ENCODE measurements at regions of chr17 and their contacts with region 1.

Region 1: DNA sequence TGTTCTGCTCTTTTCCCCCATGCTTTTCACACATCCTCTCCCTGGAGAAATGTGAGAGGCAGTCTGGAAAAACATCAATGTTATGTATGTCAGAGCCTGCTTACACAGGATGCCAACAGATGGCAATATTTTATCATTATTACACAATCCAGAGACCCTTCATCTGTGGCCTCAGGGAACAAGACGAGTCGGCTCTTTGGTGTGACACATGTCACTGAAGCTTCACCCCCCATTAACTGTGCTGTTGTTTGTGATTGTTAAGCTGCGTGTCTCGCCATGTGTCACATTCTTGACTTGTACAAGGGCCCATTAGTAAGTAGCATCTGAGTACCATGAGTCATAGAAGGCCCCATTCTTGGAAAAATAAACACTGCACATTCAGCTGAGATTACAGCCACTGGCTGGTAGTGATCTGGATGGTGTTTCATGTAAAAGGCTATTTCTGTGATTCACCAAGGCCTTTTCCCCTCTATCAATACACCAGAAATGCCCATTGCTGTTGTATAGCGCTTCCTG is 682.1 kb upstream of the SOX9 start:
- DNase-seq: peak; percentile 97
- ATAC-seq: peak; percentile 76
- H3K4me3 ChIP-seq: no peak overlapping the region
- H3K27ac ChIP-seq: peak overlapping the region; percentile 89
- H3K4me1 ChIP-seq: peaks cover 64% of the 10 kb centered on the region
- H3K27me3 ChIP-seq: no peaks in the 10 kb centered on the region
- CTCF ChIP-seq: peak; percentile 40

Region 2: DNA sequence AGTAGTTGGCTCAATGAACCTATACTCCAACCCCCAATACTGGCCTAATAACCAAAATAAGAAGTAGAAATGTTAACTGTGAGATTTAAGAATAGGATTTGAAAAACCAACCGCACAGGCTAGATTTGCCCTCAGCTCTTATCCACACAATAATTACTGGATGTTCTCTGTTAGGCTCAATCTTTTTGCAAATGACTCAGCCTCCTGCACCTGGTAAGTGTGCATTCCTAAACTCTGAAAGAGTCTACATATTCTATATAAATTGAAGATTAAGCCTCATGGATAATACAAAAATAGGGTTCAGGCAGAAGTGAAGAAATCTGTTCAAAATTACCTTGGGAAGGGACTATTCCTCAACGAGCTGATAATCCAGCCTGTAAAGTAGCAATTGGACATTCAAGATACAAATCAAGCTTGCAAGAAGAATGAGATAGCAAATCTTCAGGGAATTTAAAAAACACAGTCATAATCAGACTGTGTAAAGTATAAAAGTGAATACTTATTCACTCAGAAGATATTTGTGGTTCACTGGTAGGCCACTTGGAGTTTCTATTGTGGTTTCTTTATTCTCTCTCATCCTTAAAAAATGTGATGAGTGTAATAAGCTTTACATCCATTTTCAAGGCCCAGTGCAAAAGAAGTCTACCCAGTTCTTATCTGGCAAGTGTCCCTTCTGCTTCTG is 249.7 kb before region 1 on chr17:
- CTCF ChIA-PET with region 1: interaction called, 4 read pairs
- POLR2A ChIA-PET with region 1: no interaction called
- intact Hi-C with region 1: loop called (anchors 5 kb)
- DNase-seq: peak; percentile 96
- ATAC-seq: peak; percentile 95
- H3K4me3 ChIP-seq: peak overlapping the region; percentile 26
- H3K27ac ChIP-seq: peak overlapping the region; percentile 92
- H3K4me1 ChIP-seq: peaks cover 35% of the 10 kb centered on the region
- H3K27me3 ChIP-seq: no peaks in the 10 kb centered on the region
- CTCF ChIP-seq: no peak

Region 3: GRCh38 chr17:71455219-71455618 is 16.5 kb after region 1 on chr17:
- CTCF ChIA-PET with region 1: no interaction called
- POLR2A ChIA-PET with region 1: no interaction called
- intact Hi-C with region 1: loop called (anchors 2 kb)
- DNase-seq: peak; percentile 79
- ATAC-seq: peak; percentile 90
- H3K4me3 ChIP-seq: no peak overlapping the region
- H3K27ac ChIP-seq: peak overlapping the region; percentile 56
- H3K4me1 ChIP-seq: peaks cover 20% of the 10 kb centered on the region
- H3K27me3 ChIP-seq: no peaks in the 10 kb centered on the region
- CTCF ChIP-seq: no peak

Region 4: GRCh38 chr17:72244494-72244893 is 805.8 kb after region 1 on chr17:
- CTCF ChIA-PET with region 1: no interaction called
- POLR2A ChIA-PET with region 1: no interaction called
- intact Hi-C with region 1: no loop called
- DNase-seq: peak; percentile 72
- ATAC-seq: peak; percentile 90
- H3K4me3 ChIP-seq: no peak overlapping the region
- H3K27ac ChIP-seq: peak overlapping the region; percentile 45
- H3K4me1 ChIP-seq: peaks cover 14% of the 10 kb centered on the region
- H3K27me3 ChIP-seq: no peaks in the 10 kb centered on the region
- CTCF ChIP-seq: no peak

Region 5: DNA sequence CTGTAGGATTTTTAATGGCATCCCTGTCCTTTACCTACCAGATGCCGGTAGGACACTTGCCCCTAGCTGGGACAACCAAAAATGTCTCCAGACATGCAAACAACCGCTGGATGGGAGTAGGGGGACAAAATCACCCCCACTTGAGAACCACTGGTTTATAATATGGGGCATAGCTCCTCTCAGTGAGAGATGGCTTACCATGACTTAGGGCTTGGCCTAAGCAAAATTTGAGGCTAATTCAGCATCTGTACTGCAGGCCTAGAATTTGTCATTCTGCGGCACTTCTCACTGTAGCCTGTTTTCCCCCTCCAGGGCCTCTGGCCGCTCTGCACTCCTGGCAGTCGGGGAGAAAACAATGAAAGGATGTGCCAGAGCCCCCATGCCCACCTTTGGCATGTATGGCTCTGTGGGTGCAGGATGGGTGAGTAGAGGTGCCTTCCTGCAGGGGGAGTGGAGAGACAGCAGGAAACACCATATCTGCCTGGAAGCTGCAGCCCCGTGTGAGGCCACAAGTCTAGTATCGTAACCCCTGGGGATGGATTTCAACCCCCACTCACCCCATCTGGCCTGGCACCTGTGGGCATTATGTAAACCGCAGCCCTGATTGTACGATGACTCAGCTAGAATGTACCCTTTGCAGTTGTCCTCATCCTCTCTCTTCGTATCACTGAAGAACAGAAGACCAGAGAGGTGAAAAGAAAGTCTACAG is 950.2 kb after region 1 on chr17:
- CTCF ChIA-PET with region 1: no interaction called
- POLR2A ChIA-PET with region 1: no interaction called
- intact Hi-C with region 1: loop called (anchors 10 kb)
- DNase-seq: peak; percentile 89
- ATAC-seq: peak; percentile 2
- H3K4me3 ChIP-seq: no peak overlapping the region
- H3K27ac ChIP-seq: peak overlapping the region; percentile 97
- H3K4me1 ChIP-seq: peaks cover 84% of the 10 kb centered on the region
- H3K27me3 ChIP-seq: no peaks in the 10 kb centered on the region
- CTCF ChIP-seq: peak; percentile 62

Region 6: GRCh38 chr17:72618001-72618509 is 1179.4 kb after region 1 on chr17:
- CTCF ChIA-PET with region 1: no interaction called
- POLR2A ChIA-PET with region 1: interaction called, 15 read pairs
- intact Hi-C with region 1: no loop called
- DNase-seq: peak; percentile 76
- ATAC-seq: peak; percentile 19
- H3K4me3 ChIP-seq: peak overlapping the region; percentile 27; the same call in 1 of the 2 replicates
- H3K27ac ChIP-seq: peak overlapping the region; percentile 51
- H3K4me1 ChIP-seq: peaks cover 44% of the 10 kb centered on the region
- H3K27me3 ChIP-seq: no peaks in the 10 kb centered on the region
- CTCF ChIP-seq: no peak